ENCODE measurements at regions of chr4 and their contacts with region 1.

Region 1: GRCh38 chr4:77618383-77619122 is 12.9 kb downstream of the CXCL13 start:
- DNase-seq: peak; percentile 36 to 55
- H3K4me3 ChIP-seq: no peak overlapping the region
- H3K27ac ChIP-seq: no peak overlapping the region
- H3K4me1 ChIP-seq: no peaks in the 10 kb centered on the region
- H3K27me3 ChIP-seq: no peaks in the 10 kb centered on the region
- CTCF ChIP-seq: peak; percentile 83

Region 2: DNA sequence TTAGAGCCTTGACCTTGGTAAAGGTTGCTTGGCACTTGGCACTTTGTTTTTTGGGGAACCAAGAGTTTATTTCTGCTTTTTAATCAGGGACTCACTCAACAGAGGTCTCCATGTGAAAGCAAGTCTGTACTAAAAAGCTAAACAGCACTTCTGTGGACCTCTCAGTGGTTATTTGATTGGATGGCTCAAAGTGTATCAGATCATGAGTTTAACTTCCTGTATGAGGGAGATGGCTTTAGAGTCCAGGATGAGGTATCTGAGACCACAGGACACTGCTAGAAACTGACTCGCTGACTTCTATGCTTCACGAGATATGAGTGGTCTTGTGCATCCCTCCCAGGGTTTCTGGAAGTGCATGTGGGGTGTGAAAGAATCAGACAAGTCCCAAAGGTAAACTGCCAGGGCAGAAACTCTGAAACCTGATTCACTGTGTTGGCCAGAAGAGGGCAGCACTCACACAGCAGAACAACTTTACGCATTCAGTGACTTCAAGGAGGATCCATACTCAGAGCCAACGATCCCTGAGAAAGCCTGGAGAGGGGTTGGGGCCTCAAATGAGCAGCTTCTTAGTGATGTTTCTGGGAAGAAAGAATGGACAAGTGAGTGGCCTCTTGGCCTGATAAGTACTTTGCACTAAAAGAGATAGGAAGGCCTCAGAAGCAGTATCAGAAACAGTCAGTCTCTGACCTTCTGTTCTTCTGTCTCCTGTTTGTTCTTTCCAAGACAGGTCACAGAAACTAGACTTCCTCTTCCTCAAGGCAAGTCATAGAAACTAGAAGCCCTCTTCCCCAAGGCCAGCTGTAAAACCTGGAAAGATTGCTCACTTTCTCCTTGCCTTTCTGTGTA is 233.2 kb before region 1 on chr4:
- CTCF ChIA-PET with region 1: interaction called, 3 read pairs
- POLR2A ChIA-PET with region 1: no interaction called
- intact Hi-C with region 1: loop called (anchors 1 kb)
- DNase-seq: peak in 1 of 2 experiments; percentile 31
- H3K4me3 ChIP-seq: no peak overlapping the region
- H3K27ac ChIP-seq: no peak overlapping the region
- H3K4me1 ChIP-seq: no peaks in the 10 kb centered on the region
- H3K27me3 ChIP-seq: no peaks in the 10 kb centered on the region
- CTCF ChIP-seq: peak; percentile 76

Region 3: GRCh38 chr4:77697860-77698590 is 79.5 kb after region 1 on chr4:
- CTCF ChIA-PET with region 1: interaction called, 4 read pairs
- POLR2A ChIA-PET with region 1: no interaction called
- intact Hi-C with region 1: loop called (anchors 2 kb)
- DNase-seq: peak in 1 of 2 experiments; percentile 9
- H3K4me3 ChIP-seq: no peak overlapping the region
- H3K27ac ChIP-seq: no peak overlapping the region
- H3K4me1 ChIP-seq: peaks cover 31% of the 10 kb centered on the region
- H3K27me3 ChIP-seq: no peaks in the 10 kb centered on the region
- CTCF ChIP-seq: peak; percentile 49

Region 4: GRCh38 chr4:78845472-78845871 is 1226.9 kb after region 1 on chr4:
- CTCF ChIA-PET with region 1: interaction called, 12 read pairs
- POLR2A ChIA-PET with region 1: no interaction called
- intact Hi-C with region 1: no loop called
- DNase-seq: no peak
- H3K4me3 ChIP-seq: no peak overlapping the region
- H3K27ac ChIP-seq: no peak overlapping the region
- H3K4me1 ChIP-seq: no peaks in the 10 kb centered on the region
- H3K27me3 ChIP-seq: no peaks in the 10 kb centered on the region
- CTCF ChIP-seq: no peak